ENCODE measurements at regions of chr5 and their contacts with region 1.

Region 1: GRCh38 chr5:158811350-158811749 is 288.4 kb downstream of the EBF1 start:
- DNase-seq: no peak
- ATAC-seq: no peak
- H3K4me3 ChIP-seq: no peak overlapping the region
- H3K4me3 Mint-ChIP-seq: no peak overlapping the region
- H3K27ac ChIP-seq: no peak overlapping the region
- H3K27ac Mint-ChIP-seq: no peak overlapping the region
- H3K4me1 ChIP-seq: peaks cover 10 to 19% of the 10 kb centered on the region in 2 experiments
- H3K4me1 Mint-ChIP-seq: peaks cover 32 to 39% (median 38%) of the 10 kb centered on the region in 3 donors
- H3K27me3 ChIP-seq: peaks cover 0 to 3% of the 10 kb centered on the region in 2 experiments
- H3K27me3 Mint-ChIP-seq: no peaks in the 10 kb centered on the region

Region 2: DNA sequence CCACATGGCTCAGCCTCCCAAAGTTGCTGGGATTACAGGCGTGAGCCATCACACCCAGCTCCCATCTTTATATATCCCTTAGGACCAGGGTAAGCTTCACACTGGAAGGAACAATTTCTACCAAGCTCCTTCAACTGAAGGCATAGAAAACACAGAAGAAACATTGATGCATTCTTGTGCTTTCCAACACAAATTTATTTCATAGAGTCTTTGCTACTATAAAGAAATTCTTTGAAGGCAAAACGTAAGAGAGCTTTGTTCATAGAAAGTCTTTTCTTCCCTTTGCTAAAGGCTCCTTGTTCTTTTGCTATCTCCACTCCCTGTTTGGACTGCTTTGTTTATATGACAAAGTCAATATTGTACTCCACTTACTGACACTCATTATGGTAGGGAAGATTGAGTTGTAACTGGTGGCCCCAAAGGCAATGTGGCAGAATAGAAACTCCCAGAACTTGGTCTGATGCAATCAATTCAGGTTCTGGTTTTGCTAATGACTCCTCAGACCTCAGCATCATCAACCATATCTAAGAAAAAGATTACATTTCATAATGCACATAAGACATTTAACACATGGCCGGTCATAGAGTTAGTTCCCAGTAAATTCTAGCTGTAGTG is 855.0 kb before region 1 on chr5:
- CTCF ChIA-PET with region 1: interaction called in 1 of 2 experiments, 17 read pairs
- POLR2A ChIA-PET with region 1: no interaction called
- DNase-seq: no peak
- ATAC-seq: no peak
- H3K4me3 ChIP-seq: no peak overlapping the region
- H3K4me3 Mint-ChIP-seq: no peak overlapping the region
- H3K27ac ChIP-seq: no peak overlapping the region
- H3K27ac Mint-ChIP-seq: no peak overlapping the region
- H3K4me1 ChIP-seq: no peaks in the 10 kb centered on the region
- H3K4me1 Mint-ChIP-seq: no peaks in the 10 kb centered on the region
- H3K27me3 ChIP-seq: peaks cover 0 to 9% of the 10 kb centered on the region in 2 experiments
- H3K27me3 Mint-ChIP-seq: peaks cover 4 to 13% of the 10 kb centered on the region in 2 donors

Region 3: GRCh38 chr5:158786390-158786789 is 25.0 kb before region 1 on chr5:
- CTCF ChIA-PET with region 1: no interaction called
- POLR2A ChIA-PET with region 1: no interaction called
- DNase-seq: no peak
- ATAC-seq: no peak
- H3K4me3 ChIP-seq: no peak overlapping the region
- H3K4me3 Mint-ChIP-seq: no peak overlapping the region
- H3K27ac ChIP-seq: no peak overlapping the region
- H3K27ac Mint-ChIP-seq: no peak overlapping the region
- H3K4me1 ChIP-seq: no peaks in the 10 kb centered on the region
- H3K4me1 Mint-ChIP-seq: no peaks in the 10 kb centered on the region
- H3K27me3 ChIP-seq: no peaks in the 10 kb centered on the region
- H3K27me3 Mint-ChIP-seq: peaks cover 0 to 9% of the 10 kb centered on the region in 2 donors